Heart right ventricle (tissue), 16 donors: ENCODE measurements at regions of chr10 and their contacts with region 1.

Region 1: DNA sequence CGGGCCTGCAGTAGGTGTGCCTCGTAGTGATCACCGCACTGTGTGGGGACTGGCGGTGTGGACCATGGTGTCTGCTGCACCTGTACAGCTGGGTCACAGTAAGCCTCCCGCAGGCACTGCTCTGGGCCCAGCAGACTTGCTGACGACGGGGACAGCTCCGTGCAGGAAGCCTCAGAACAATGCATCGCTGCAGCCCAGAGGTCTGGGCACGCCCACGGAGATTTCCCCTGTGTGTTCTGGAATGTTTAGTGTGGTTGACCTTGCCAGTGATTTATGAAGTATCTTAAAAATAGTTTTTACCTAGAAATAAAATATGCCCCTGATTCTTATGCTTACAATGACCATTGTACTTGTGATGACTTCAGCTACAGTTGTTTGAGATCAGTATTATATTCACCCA is 59.1 kb upstream of the ZNF32 start:
- DNase-seq: peak; percentile 58 to 84
- ATAC-seq: peak; percentile 77 to 97 (median 95)
- H3K4me3 ChIP-seq: no peak overlapping the region
- H3K27ac ChIP-seq: peak overlapping the region in 8 of 10 donors; percentile 68 to 92 (median 79)
- H3K4me1 ChIP-seq: peaks cover 4 to 59% (median 31%) of the 10 kb centered on the region in 9 donors
- H3K27me3 ChIP-seq: no peaks in the 10 kb centered on the region
- CTCF ChIP-seq: no peak

Region 2: GRCh38 chr10:43775384-43775783 is 67.6 kb after region 1 on chr10:
- intact Hi-C with region 1: loop called in 1 of 10 experiments (anchors 5 kb)
- DNase-seq: no peak
- ATAC-seq: no peak
- H3K4me3 ChIP-seq: no peak overlapping the region
- H3K27ac ChIP-seq: no peak overlapping the region
- H3K4me1 ChIP-seq: peaks cover 0 to 15% (median 0%) of the 10 kb centered on the region in 9 donors
- H3K27me3 ChIP-seq: no peaks in the 10 kb centered on the region
- CTCF ChIP-seq: no peak

Region 3: GRCh38 chr10:43846187-43846680 is 138.5 kb after region 1 on chr10:
- intact Hi-C with region 1: loop called in 1 of 10 experiments (anchors 5 kb)
- DNase-seq: peak; percentile 50 to 54
- ATAC-seq: peak; percentile 68 to 86 (median 76)
- H3K4me3 ChIP-seq: peak overlapping the region in 3 of 10 donors; percentile 15 to 31 (median 26)
- H3K27ac ChIP-seq: peak overlapping the region in 9 of 10 donors; percentile 33 to 89 (median 57)
- H3K4me1 ChIP-seq: peaks cover 0 to 42% (median 18%) of the 10 kb centered on the region in 9 donors
- H3K27me3 ChIP-seq: no peaks in the 10 kb centered on the region
- CTCF ChIP-seq: peak in 2 of 9 donors; percentile 33 to 40

Region 4: GRCh38 chr10:43981232-43981631 is 273.5 kb after region 1 on chr10:
- intact Hi-C with region 1: no loop called
- DNase-seq: no peak
- ATAC-seq: no peak
- H3K4me3 ChIP-seq: no peak overlapping the region
- H3K27ac ChIP-seq: peak overlapping the region in 1 of 10 donors; percentile 31
- H3K4me1 ChIP-seq: peaks cover 0 to 42% (median 19%) of the 10 kb centered on the region in 9 donors
- H3K27me3 ChIP-seq: no peaks in the 10 kb centered on the region
- CTCF ChIP-seq: no peak